ENCODE measurements at regions of chr3 and their contacts with region 1.

Region 1: DNA sequence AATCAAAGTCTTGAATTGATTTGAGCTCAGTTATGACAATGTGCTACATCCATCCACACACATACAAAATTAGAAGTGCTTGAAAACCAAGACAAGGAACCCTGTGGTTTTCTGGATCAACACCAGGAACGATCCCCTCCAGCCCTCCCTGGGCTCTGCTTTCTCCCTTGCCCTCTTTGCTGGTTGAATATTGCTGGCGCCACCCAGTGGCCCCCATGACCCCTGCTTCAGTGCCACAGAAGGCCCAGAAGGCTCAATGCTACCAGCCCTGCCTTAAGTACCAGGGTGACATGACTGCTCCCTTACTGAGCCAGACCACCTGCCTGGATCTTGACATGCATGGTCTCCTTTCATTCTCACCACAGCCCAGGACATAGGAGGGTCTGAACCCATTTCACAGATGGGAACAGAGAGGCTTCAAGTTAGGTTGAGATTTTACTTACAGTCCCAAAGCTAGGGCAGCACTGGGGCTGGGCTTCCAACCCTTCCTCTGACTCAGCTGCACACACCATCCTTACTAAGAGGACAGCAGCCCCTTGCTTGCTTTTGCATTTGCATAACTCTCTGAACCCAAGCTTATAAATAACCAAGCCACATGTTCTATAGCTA is 15.0 kb downstream of the IL12A start:
- DNase-seq: no peak
- H3K4me3 ChIP-seq: no peak overlapping the region
- H3K27ac ChIP-seq: no peak overlapping the region
- H3K4me1 ChIP-seq: no peaks in the 10 kb centered on the region
- H3K27me3 ChIP-seq: no peaks in the 10 kb centered on the region
- CTCF ChIP-seq: peak in 2 of 4 experiments; percentile 17 to 41
- POLR2A ChIP-seq: no peak

Region 2: GRCh38 chr3:158845765-158846350 is 1157.8 kb before region 1 on chr3:
- intact Hi-C with region 1: loop called (anchors 10 kb)
- DNase-seq: no peak
- H3K4me3 ChIP-seq: no peak overlapping the region
- H3K27ac ChIP-seq: no peak overlapping the region
- H3K4me1 ChIP-seq: no peaks in the 10 kb centered on the region
- H3K27me3 ChIP-seq: no peaks in the 10 kb centered on the region
- CTCF ChIP-seq: peak in 3 of 4 experiments; percentile 67 to 71 (median 70)
- POLR2A ChIP-seq: no peak

Region 3: DNA sequence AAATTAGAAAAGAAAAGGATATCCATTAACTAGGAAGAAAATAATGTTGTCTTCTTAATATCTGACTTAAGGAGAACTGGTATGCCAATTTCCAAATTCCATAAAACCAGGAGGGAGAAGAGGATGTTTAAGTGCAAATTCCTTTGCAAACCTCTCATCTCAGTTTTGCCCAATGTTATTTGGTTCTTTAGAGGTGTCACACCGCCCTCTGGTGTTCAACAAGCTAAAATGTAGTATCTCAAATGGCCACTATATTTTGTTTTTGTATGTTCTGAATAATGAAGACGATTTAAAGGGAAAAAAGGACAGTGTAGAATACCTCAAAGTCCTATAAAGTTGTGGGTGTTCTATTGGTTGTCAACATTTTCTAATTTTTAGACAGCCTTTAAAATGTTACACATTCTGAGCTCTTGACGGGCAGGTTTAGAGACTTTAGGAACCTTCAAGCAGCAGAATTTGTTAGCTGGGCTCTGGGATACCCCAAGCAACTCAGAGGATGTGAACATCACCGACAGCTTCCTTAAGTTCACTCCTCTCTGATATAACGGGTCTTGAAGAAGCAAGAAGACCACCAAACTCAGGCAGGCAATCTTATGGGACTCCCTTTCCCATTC is 743.5 kb before region 1 on chr3:
- intact Hi-C with region 1: loop called (anchors 5 kb)
- DNase-seq: peak; percentile 33
- H3K4me3 ChIP-seq: no peak overlapping the region
- H3K27ac ChIP-seq: no peak overlapping the region
- H3K4me1 ChIP-seq: no peaks in the 10 kb centered on the region
- H3K27me3 ChIP-seq: no peaks in the 10 kb centered on the region
- CTCF ChIP-seq: peak; percentile 45 to 90 (median 82)
- POLR2A ChIP-seq: no peak

Region 4: DNA sequence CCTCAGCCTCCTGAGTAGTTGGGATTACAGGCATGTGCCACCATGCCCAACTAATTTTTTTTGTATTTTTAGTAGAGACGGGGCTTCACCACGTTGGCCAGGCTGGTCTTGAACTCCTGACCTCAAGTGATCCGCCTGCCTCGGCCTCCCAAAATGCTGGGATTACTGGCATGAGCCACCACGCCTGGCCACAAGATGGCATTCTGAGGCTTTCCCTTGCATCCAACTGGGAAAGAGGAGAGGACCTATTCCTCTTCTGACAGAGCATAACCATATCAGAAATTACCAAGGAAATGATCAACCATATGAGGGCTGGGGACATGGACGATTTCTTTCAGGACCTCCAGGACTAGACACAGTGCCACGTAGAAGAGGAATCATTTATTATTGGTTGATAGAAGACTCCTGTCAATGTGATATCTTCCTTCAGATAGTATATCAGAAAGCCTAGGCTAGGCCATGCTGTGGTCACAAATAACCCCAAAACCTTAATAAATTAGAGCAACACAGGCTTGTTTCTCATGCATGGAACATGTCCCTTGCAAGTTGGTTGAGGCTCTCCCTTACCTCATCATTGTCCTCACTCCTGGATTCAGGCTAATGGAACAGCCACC is 387.3 kb before region 1 on chr3:
- intact Hi-C with region 1: loop called (anchors 5 kb)
- DNase-seq: peak; percentile 8
- H3K4me3 ChIP-seq: no peak overlapping the region
- H3K27ac ChIP-seq: no peak overlapping the region
- H3K4me1 ChIP-seq: no peaks in the 10 kb centered on the region
- H3K27me3 ChIP-seq: no peaks in the 10 kb centered on the region
- CTCF ChIP-seq: peak; percentile 23 to 69 (median 56)
- POLR2A ChIP-seq: no peak

Region 5: GRCh38 chr3:159813822-159814523 is 189.7 kb before region 1 on chr3:
- intact Hi-C with region 1: no loop called
- DNase-seq: peak; percentile 37
- H3K4me3 ChIP-seq: no peak overlapping the region
- H3K27ac ChIP-seq: no peak overlapping the region
- H3K4me1 ChIP-seq: no peaks in the 10 kb centered on the region
- H3K27me3 ChIP-seq: no peaks in the 10 kb centered on the region
- CTCF ChIP-seq: no peak
- POLR2A ChIP-seq: no peak

Region 6: DNA sequence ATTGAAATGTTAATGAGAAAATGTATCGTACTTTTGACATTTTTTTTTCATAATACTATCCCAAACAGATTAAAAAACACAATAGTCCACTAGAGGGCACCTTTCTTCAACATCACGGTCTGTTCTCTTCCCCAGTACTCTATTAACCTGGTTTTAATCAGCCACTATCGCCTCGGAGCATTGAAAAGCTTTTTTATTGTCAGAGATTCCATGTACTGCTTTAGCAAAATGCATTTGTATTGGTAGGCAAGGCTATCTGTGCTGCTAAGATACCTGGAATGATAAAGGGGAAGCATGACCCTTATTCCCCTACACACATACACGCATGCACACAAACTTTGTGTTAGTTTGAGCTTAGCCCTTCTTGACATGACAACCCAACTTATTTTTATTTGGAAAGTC is 175.1 kb before region 1 on chr3:
- intact Hi-C with region 1: loop called (anchors 5 kb)
- DNase-seq: no peak
- H3K4me3 ChIP-seq: no peak overlapping the region
- H3K27ac ChIP-seq: no peak overlapping the region
- H3K4me1 ChIP-seq: no peaks in the 10 kb centered on the region
- H3K27me3 ChIP-seq: no peaks in the 10 kb centered on the region
- CTCF ChIP-seq: peak in 3 of 4 experiments; percentile 45 to 63 (median 56)
- POLR2A ChIP-seq: no peak

Region 7: GRCh38 chr3:159884661-159885402 is 118.8 kb before region 1 on chr3:
- intact Hi-C with region 1: loop called (anchors 2 kb)
- DNase-seq: no peak
- H3K4me3 ChIP-seq: no peak overlapping the region
- H3K27ac ChIP-seq: no peak overlapping the region
- H3K4me1 ChIP-seq: no peaks in the 10 kb centered on the region
- H3K27me3 ChIP-seq: no peaks in the 10 kb centered on the region
- CTCF ChIP-seq: peak in 3 of 4 experiments; percentile 35 to 64 (median 57)
- POLR2A ChIP-seq: no peak

Region 8: GRCh38 chr3:160038862-160039562 is 35.4 kb after region 1 on chr3:
- intact Hi-C with region 1: no loop called
- DNase-seq: peak; percentile 24
- H3K4me3 ChIP-seq: peak overlapping the region; percentile 7 to 27
- H3K27ac ChIP-seq: no peak overlapping the region
- H3K4me1 ChIP-seq: no peaks in the 10 kb centered on the region
- H3K27me3 ChIP-seq: no peaks in the 10 kb centered on the region
- CTCF ChIP-seq: no peak
- POLR2A ChIP-seq: no peak

Measured in prostate gland (tissue), 2 donors.